Activated CD4-positive, alpha-beta memory T cell treated with anti-CD3 and anti-CD28 coated beads, Interleukin-2, amount 10 ng/mL, durations not matched to agents 7 days and 5 days (primary cell): ENCODE measurements at regions of chr4 and their contacts with region 1.

Region 1: GRCh38 chr4:70993181-70994068 is at the start of gene DCK:
- DNase-seq: peak; percentile 88
- H3K4me3 Mint-ChIP-seq: peak within 1 kb of the TSS; percentile 97
- H3K27ac Mint-ChIP-seq: peak within 1 kb of the TSS; percentile 80
- H3K4me1 Mint-ChIP-seq: peaks cover 45% of the 10 kb centered on the region
- H3K27me3 Mint-ChIP-seq: no peaks in the 10 kb centered on the region
- total RNA-seq, gene DCK: 79.0 to 85.1 TPM

Region 2: DNA sequence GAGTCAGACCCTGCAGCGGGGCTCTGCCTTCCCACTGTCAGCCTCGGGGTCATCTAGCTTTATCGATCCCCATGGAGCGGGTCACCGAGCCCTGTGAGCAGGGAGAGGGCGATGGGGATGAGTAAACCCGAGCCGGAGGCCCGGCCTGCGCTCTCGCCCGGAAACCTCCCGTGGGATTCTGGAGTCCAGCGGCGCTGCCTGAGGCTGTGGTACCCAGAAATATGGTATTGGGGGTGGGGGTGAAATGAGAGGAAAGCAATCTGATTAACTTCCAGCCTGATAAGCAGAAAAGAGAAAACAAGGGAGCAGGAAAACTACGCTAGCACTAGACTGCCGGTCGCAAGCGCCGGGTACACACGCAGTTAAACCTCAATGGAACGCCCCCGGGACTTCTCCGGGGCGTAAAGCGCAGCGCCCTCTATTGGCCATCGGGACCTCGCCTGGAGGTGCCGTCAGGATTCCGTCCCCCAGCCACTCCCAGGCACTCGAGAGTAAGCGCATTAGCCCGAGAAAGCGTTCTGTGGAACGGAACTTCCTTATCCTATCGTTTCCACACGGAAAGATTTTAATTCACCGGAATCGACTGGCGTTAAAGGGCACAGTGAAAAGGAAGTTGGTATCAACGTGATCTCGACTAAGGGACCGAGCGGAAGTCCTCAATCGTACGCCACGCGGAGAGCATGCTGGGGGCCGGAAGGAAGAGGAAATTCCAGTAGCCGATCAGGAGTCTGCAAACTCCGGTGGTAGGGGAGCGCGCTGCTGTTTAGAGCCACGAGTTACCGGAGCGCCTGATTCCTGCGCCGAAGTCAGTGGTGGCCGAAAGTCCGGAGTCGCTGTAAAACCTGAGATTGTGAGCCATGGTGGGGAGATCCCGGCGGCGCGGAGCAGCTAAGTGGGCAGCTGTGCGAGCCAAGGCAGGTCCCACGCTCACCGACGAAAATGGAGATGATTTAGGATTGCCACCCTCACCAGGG is 305.3 kb before region 1 on chr4 and contains the start of gene UTP3:
- CTCF ChIA-PET with region 1: interaction called, 3 read pairs
- POLR2A ChIA-PET with region 1: interaction called, 10 read pairs
- DNase-seq: peak; percentile 92
- H3K4me3 Mint-ChIP-seq: peak within 1 kb of the TSS; percentile 97
- H3K27ac Mint-ChIP-seq: peak within 1 kb of the TSS; percentile 93
- H3K4me1 Mint-ChIP-seq: peaks cover 39% of the 10 kb centered on the region
- H3K27me3 Mint-ChIP-seq: no peaks in the 10 kb centered on the region
- total RNA-seq, gene UTP3: 28.7 to 28.9 TPM

Region 3: DNA sequence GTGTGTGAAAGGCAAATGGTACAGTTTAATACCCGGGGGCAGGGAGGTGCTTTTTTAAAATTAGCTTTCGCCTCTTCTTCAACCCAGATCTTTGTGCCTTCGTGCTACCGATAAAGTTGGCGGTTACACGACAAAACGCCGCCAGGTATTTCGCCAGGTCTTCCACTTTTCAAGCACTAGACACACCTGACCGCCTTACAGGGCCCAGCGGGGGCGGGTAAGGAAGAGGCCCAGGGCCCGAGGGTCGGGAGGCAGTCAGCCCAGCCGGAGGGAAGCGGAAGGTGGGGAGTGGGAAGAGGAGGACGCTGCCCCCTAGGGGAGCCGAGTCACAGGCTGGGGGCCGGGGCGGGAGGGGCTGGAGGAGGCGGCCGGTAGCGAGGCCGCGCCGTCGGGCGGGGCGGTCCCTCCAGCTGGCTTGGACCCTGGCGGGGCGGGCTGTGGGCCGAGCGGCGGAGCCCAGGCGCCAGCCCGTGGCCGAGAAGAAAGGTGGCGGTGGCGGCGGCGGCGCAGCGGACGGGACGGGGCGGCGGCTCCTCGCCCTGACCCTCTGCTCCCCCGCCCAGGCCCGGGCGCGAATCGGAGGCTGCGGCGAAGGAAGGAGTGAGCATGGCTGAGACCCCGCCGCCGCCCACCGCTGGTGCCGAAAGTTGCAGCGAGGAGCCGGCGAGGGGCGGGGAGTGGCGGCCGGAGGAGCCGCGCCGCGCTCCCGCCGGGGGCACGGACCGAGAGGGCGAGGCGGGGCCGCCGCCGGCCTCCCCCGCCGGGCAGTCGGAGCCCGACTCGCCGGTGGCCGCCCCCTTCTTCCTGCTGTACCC is 288.9 kb before region 1 on chr4:
- CTCF ChIA-PET with region 1: no interaction called
- POLR2A ChIA-PET with region 1: interaction called, 10 read pairs
- DNase-seq: peak; percentile 59
- H3K4me3 Mint-ChIP-seq: peak overlapping the region; percentile 80
- H3K27ac Mint-ChIP-seq: peak overlapping the region; percentile 31
- H3K4me1 Mint-ChIP-seq: peaks cover 22% of the 10 kb centered on the region
- H3K27me3 Mint-ChIP-seq: no peaks in the 10 kb centered on the region

Region 4: GRCh38 chr4:70839589-70840093 is 153.8 kb before region 1 on chr4 and contains the start of gene GRSF1:
- CTCF ChIA-PET with region 1: interaction called, 10 read pairs
- POLR2A ChIA-PET with region 1: interaction called, 40 read pairs
- DNase-seq: peak; percentile 95
- H3K4me3 Mint-ChIP-seq: peak within 1 kb of the TSS; percentile 85
- H3K27ac Mint-ChIP-seq: peak within 1 kb of the TSS; percentile 90
- H3K4me1 Mint-ChIP-seq: peaks cover 29% of the 10 kb centered on the region
- H3K27me3 Mint-ChIP-seq: no peaks in the 10 kb centered on the region
- total RNA-seq, gene GRSF1: 63.5 to 63.8 TPM

Region 5: DNA sequence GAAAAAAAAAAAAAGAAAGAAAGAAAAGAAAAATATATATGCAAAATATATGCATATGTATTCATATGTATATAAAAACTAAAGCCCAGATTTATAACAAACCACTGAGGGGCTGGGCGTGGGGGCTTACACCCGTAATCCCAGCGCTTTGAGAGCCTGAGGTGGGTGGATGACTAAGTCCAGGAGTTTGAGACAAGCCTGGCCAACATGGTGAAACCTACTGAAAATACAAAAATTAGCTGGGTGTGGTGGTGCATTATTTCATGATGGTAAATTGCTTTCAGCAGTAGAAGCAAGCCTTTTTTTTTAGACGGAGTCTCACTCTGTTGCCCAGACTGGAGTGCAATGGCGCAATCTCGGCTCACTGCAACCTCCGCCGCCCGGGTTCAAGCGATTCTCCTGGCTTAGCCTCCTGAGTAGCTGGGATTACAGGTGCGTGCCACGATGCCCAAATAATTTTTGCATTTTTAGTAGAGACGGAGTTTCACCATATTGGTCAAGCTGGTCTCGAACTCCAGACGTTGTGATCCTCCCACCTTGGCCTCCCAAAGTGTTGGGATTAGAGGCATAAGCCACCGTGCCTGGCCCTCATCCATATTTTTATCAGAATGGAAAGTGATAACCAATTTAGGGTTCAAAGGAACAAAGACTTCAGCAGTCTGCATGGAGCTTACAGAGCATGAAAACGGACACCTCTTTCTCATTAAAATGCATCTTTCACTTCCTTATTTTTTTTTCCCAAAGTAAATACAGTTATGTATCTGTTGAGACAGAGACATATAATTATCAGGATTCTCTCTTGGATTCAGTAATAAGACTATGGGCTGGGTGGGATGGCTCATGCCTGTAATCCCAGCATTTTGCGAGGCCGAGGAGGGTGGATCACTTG is 118.9 kb before region 1 on chr4:
- CTCF ChIA-PET with region 1: no interaction called
- POLR2A ChIA-PET with region 1: no interaction called
- DNase-seq: no peak
- H3K4me3 Mint-ChIP-seq: no peak overlapping the region
- H3K27ac Mint-ChIP-seq: no peak overlapping the region
- H3K4me1 Mint-ChIP-seq: no peaks in the 10 kb centered on the region
- H3K27me3 Mint-ChIP-seq: no peaks in the 10 kb centered on the region

Region 6: GRCh38 chr4:70901984-70902576 is 91.3 kb before region 1 on chr4 and contains the start of gene MOB1B:
- CTCF ChIA-PET with region 1: interaction called, 5 read pairs
- POLR2A ChIA-PET with region 1: interaction called, 16 read pairs
- DNase-seq: peak; percentile 89
- H3K4me3 Mint-ChIP-seq: peak within 1 kb of the TSS; percentile 95
- H3K27ac Mint-ChIP-seq: peak within 1 kb of the TSS; percentile 80
- H3K4me1 Mint-ChIP-seq: peaks cover 18% of the 10 kb centered on the region
- H3K27me3 Mint-ChIP-seq: no peaks in the 10 kb centered on the region
- total RNA-seq, gene MOB1B: 15.3 to 15.9 TPM

Region 7: GRCh38 chr4:71004281-71004851 is 10.9 kb after region 1 on chr4:
- CTCF ChIA-PET with region 1: interaction called, 74 read pairs
- POLR2A ChIA-PET with region 1: interaction called, 41 read pairs
- DNase-seq: peak; percentile 45
- H3K4me3 Mint-ChIP-seq: peak overlapping the region; percentile 48
- H3K27ac Mint-ChIP-seq: peak overlapping the region; percentile 77
- H3K4me1 Mint-ChIP-seq: peaks cover 88% of the 10 kb centered on the region
- H3K27me3 Mint-ChIP-seq: no peaks in the 10 kb centered on the region

Region 8: GRCh38 chr4:71009890-71010588 is 16.6 kb after region 1 on chr4:
- CTCF ChIA-PET with region 1: interaction called, 74 read pairs
- POLR2A ChIA-PET with region 1: interaction called, 41 read pairs
- DNase-seq: no peak
- H3K4me3 Mint-ChIP-seq: no peak overlapping the region
- H3K27ac Mint-ChIP-seq: no peak overlapping the region
- H3K4me1 Mint-ChIP-seq: peaks cover 41% of the 10 kb centered on the region
- H3K27me3 Mint-ChIP-seq: no peaks in the 10 kb centered on the region

Region 9: DNA sequence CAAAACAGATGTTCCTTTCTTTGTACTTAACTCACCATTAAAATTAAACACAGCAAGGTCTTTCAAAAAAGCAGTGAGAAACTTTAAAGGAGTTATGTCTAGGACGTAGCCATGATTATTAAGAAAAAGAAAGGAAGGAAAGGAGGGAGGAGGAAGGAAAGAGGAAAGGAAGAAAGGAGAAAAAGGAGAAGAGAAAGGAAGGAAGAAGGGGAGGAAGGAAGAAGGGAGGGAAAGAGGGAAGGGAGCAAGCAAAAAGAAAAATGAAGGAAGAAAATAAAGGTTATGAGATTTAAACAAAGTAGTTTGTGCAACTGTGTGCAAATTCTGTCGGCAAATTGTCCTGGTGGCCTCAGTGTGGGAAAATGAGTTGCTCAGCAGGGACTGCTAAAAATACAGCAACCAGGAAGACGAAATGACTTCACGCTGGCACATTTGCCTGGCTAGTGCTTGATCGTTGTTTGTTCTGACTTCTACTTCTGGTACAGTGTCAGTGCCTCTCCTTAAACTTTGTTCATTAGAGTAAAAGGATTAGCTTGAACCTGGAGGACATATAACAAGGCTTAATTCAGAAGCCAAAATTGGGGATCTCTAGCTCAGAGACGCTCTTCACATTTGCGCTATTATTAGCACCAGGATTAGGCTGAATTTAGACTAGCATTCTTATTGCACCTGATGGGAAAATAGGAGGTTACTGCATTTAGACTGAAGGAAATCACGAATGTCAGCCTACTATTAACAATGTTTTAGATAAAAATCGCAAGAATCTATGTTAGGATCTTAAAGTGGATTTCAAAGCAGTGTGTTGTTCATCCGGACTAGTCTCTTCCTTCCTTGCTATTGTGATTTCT is 81.3 kb after region 1 on chr4:
- CTCF ChIA-PET with region 1: no interaction called
- POLR2A ChIA-PET with region 1: no interaction called
- DNase-seq: no peak
- H3K4me3 Mint-ChIP-seq: no peak overlapping the region
- H3K27ac Mint-ChIP-seq: no peak overlapping the region
- H3K4me1 Mint-ChIP-seq: no peaks in the 10 kb centered on the region
- H3K27me3 Mint-ChIP-seq: peaks cover 13% of the 10 kb centered on the region